PC-9 (cell line): ENCODE measurements at regions of chr1 and their contacts with region 1.

Region 1: GRCh38 chr1:94237291-94238226 is at the start of gene ARHGAP29:
- DNase-seq: peak; percentile 88 to 91
- H3K4me3 ChIP-seq: peak within 1 kb of the TSS; percentile 87
- H3K27ac ChIP-seq: peak within 1 kb of the TSS; percentile 85
- H3K4me1 ChIP-seq: peaks cover 70% of the 10 kb centered on the region
- H3K27me3 ChIP-seq: no peaks in the 10 kb centered on the region
- CTCF ChIP-seq: no peak
- total RNA-seq, gene ARHGAP29: 123 and 137 TPM in 2 replicates

Region 2: GRCh38 chr1:93537924-93538323 is 699.6 kb before region 1 on chr1:
- CTCF ChIA-PET with region 1: no interaction called
- POLR2A ChIA-PET with region 1: no interaction called
- intact Hi-C with region 1: no loop called
- DNase-seq: no peak
- H3K4me3 ChIP-seq: no peak overlapping the region
- H3K27ac ChIP-seq: no peak overlapping the region
- H3K4me1 ChIP-seq: no peaks in the 10 kb centered on the region
- H3K27me3 ChIP-seq: no peaks in the 10 kb centered on the region
- CTCF ChIP-seq: no peak

Region 3: GRCh38 chr1:94061513-94062443 is 175.8 kb before region 1 on chr1:
- CTCF ChIA-PET with region 1: interaction called, 5 read pairs
- POLR2A ChIA-PET with region 1: interaction called, 4 read pairs
- intact Hi-C with region 1: loop called (anchors 5 kb)
- DNase-seq: peak; percentile 65 to 83
- H3K4me3 ChIP-seq: no peak overlapping the region
- H3K27ac ChIP-seq: peak overlapping the region; percentile 52
- H3K4me1 ChIP-seq: peaks cover 44% of the 10 kb centered on the region
- H3K27me3 ChIP-seq: no peaks in the 10 kb centered on the region
- CTCF ChIP-seq: peak; percentile 95

Region 4: DNA sequence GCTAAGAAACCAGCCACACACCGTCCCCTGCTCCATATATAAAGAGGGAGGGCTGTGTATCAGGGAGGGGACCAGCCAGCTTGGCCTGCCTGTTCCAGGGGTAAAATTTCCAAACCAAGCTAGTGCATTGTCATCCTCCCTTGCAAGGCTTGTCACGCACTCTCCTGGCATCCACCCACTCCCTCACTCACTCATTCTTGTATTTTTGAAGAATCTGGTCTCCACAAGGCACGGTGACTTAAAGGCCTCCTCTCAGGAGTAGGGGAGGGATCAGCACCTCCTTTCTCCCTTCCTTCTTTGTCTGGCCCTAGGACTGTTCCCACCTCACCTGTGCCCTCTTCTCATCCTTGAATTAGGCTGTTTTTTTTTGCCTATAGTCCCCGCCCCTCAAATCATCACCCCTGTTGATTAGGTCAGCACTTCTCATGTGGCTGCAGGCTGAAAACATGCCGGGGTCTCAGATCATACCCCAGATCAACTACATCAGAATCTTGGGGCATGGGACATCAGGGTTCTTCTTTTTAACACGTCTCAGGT is 121.6 kb before region 1 on chr1:
- CTCF ChIA-PET with region 1: no interaction called
- POLR2A ChIA-PET with region 1: interaction called, 14 read pairs
- intact Hi-C with region 1: no loop called
- DNase-seq: no peak
- H3K4me3 ChIP-seq: no peak overlapping the region
- H3K27ac ChIP-seq: peak overlapping the region; percentile 39
- H3K4me1 ChIP-seq: peaks cover 49% of the 10 kb centered on the region
- H3K27me3 ChIP-seq: no peaks in the 10 kb centered on the region
- CTCF ChIP-seq: no peak

Region 5: DNA sequence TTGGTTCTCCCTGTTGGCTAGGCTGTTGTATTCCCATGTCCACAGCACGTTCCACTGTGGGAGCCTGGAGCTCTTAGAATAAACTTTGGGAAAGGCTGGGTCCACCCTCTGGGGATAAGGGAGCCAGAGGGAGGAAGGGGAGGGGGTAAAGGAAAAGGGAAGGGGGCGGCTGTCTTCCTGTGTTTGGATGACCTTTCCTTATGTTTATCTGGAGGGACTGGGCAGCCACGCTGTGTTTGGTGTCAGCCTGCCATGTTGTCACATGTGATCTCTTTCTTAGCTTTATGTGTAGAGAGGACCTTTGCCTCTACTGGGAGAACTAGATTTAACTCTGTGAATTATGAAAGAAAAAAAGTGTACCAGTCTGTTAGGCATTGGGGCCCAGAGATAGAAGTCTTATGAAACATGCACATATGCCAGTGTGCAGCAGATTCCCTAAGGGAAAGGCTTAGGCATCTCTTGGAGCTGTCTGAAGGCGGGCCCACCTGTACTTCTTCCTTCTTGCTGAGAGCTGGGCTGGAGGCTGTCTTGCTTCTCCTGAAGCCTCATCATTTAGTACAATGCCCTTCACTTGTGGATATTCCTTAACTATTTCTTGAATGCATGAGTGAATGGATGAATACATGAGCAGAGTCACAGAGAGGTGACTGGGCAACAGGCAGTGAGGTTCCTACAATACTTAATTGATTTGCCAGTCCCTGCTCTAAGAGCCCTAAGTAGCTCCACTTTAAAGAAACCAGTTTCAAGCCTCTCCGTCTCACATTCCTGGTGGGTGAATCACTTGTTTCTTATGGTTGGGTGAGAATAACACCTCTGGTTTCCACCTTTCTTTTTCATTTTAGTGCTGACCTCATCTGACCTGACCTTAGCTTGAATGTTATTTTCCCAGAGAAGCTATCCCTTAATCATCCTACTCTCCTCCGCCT is 62.3 kb after region 1 on chr1:
- CTCF ChIA-PET with region 1: no interaction called
- POLR2A ChIA-PET with region 1: interaction called, 13 read pairs
- intact Hi-C with region 1: no loop called
- DNase-seq: peak; percentile 71 to 100
- H3K4me3 ChIP-seq: peak overlapping the region; percentile 3; the same call in 1 of the 2 replicates
- H3K27ac ChIP-seq: peak overlapping the region; percentile 97
- H3K4me1 ChIP-seq: peaks cover 55% of the 10 kb centered on the region
- H3K27me3 ChIP-seq: no peaks in the 10 kb centered on the region
- CTCF ChIP-seq: no peak

Region 6: GRCh38 chr1:94463765-94464330 is 226.3 kb after region 1 on chr1:
- CTCF ChIA-PET with region 1: no interaction called
- POLR2A ChIA-PET with region 1: no interaction called
- intact Hi-C with region 1: loop called (anchors 5 kb)
- DNase-seq: peak; percentile 29 to 67
- H3K4me3 ChIP-seq: no peak overlapping the region
- H3K27ac ChIP-seq: peak overlapping the region; percentile 11; the same call in 1 of the 2 replicates
- H3K4me1 ChIP-seq: peaks cover 5% of the 10 kb centered on the region
- H3K27me3 ChIP-seq: no peaks in the 10 kb centered on the region
- CTCF ChIP-seq: peak; percentile 86